ENCODE measurements at regions of chr9 and their contacts with region 1.

Region 1: GRCh38 chr9:91837981-91838731 is 111.9 kb downstream of the ROR2 start:
- DNase-seq: peak; percentile 67 to 80 (median 78)
- H3K4me3 ChIP-seq: peak overlapping the region; percentile 31
- H3K27ac ChIP-seq: peak overlapping the region; percentile 66 to 72
- H3K4me1 ChIP-seq: peaks cover 19% of the 10 kb centered on the region
- H3K27me3 ChIP-seq: no peaks in the 10 kb centered on the region
- CTCF ChIP-seq: no peak
- EP300 ChIP-seq: no peak
- POLR2A ChIP-seq: no peak

Region 2: GRCh38 chr9:90385146-90385545 is 1453.0 kb before region 1 on chr9:
- intact Hi-C with region 1: loop called in 1 of 4 experiments (anchors 10 kb)
- DNase-seq: no peak
- H3K4me3 ChIP-seq: no peak overlapping the region
- H3K27ac ChIP-seq: no peak overlapping the region
- H3K4me1 ChIP-seq: no peaks in the 10 kb centered on the region
- H3K27me3 ChIP-seq: no peaks in the 10 kb centered on the region
- CTCF ChIP-seq: no peak
- EP300 ChIP-seq: no peak
- POLR2A ChIP-seq: no peak

Region 3: DNA sequence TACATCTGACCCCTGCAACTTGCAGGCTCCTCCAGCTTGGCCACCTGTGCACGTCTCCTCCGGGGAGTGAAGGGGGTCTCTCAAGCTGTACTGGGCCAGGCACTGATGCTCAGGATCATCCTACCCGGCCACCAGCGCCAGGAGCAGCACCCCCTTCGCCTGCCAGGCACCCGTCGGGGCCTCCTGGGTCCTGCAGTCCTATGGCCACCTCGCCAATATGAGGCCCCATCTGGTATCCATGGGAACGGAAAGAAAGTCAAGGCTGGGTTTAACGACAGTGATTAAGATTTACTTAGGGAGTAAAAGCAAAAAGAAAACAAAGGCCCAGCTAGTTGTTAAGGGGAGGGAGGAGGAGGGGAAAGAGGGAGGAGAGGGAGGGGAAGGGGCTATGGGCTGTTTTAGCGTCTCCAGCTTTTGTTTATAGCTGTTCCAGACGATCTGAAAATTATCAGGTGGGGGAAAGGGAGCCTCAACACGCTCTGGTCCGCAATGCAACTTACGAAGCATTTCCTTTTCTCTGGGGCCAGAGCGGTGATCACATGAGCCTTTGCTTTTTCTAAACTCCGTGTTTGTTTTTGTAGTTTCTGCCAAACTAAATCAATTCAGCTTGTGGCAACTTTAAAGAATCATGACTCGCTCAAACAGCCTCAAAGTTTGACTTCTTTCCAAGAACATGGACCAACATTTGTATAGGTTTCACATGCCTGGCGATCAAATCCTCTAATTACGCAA is 20.5 kb before region 1 on chr9:
- intact Hi-C with region 1: loop called in 1 of 4 experiments (anchors 2 kb)
- DNase-seq: peak; percentile 52 to 63 (median 57)
- H3K4me3 ChIP-seq: no peak overlapping the region
- H3K27ac ChIP-seq: peak overlapping the region; percentile 24 to 75
- H3K4me1 ChIP-seq: peaks cover 17% of the 10 kb centered on the region
- H3K27me3 ChIP-seq: no peaks in the 10 kb centered on the region
- CTCF ChIP-seq: no peak
- EP300 ChIP-seq: no peak
- POLR2A ChIP-seq: no peak

Region 4: GRCh38 chr9:92234514-92234913 is 396.4 kb after region 1 on chr9:
- intact Hi-C with region 1: no loop called
- DNase-seq: no peak
- H3K4me3 ChIP-seq: no peak overlapping the region
- H3K27ac ChIP-seq: no peak overlapping the region
- H3K4me1 ChIP-seq: no peaks in the 10 kb centered on the region
- H3K27me3 ChIP-seq: no peaks in the 10 kb centered on the region
- CTCF ChIP-seq: no peak
- EP300 ChIP-seq: no peak
- POLR2A ChIP-seq: no peak